ENCODE measurements at regions of chr5 and their contacts with region 1.

Region 1: DNA sequence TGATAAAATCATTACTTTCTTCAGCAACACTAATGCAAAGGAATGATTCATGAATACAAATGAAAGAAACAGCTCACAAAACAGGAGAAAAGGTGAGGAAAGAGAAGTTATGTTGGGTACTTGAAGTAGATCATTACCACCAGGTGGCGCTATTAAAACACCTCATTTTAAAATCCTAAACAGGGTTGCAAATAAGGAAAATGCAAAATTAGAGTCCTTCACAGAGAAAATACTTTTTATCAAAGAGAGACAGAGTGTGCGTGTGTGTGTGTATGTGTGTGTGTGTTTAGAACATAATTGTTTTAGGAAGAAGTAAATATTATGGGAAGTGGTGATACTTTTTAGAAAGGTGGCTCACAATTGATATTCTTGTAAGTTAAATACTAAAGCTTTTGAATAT is 49.5 kb upstream of the CD180 start:
- DNase-seq: peak in 7 of 9 donors; percentile 43 to 70 (median 64)
- ATAC-seq: peak; percentile 57
- H3K4me3 ChIP-seq: no peak overlapping the region
- H3K4me3 Mint-ChIP-seq: no peak overlapping the region
- H3K27ac ChIP-seq: no peak overlapping the region
- H3K27ac Mint-ChIP-seq: no peak overlapping the region
- H3K4me1 ChIP-seq: peaks cover 5 to 8% of the 10 kb centered on the region in 2 donors
- H3K4me1 Mint-ChIP-seq: peaks cover 2 to 22% (median 19%) of the 10 kb centered on the region in 7 donors
- H3K27me3 ChIP-seq: no peaks in the 10 kb centered on the region
- H3K27me3 Mint-ChIP-seq: peaks cover 0 to under 1% (median 0%) of the 10 kb centered on the region in 5 donors

Region 2: GRCh38 chr5:67089200-67089725 is 156.8 kb before region 1 on chr5:
- CTCF ChIA-PET with region 1: no interaction called
- POLR2A ChIA-PET with region 1: no interaction called
- intact Hi-C with region 1: no loop called
- DNase-seq: no peak
- ATAC-seq: no peak
- H3K4me3 ChIP-seq: no peak overlapping the region
- H3K4me3 Mint-ChIP-seq: no peak overlapping the region
- H3K27ac ChIP-seq: no peak overlapping the region
- H3K27ac Mint-ChIP-seq: no peak overlapping the region
- H3K4me1 ChIP-seq: no peaks in the 10 kb centered on the region
- H3K4me1 Mint-ChIP-seq: peaks cover 0 to 18% (median 5%) of the 10 kb centered on the region in 7 donors
- H3K27me3 ChIP-seq: no peaks in the 10 kb centered on the region
- H3K27me3 Mint-ChIP-seq: no peaks in the 10 kb centered on the region

Region 3: GRCh38 chr5:67361932-67362729 is 116.0 kb after region 1 on chr5:
- CTCF ChIA-PET with region 1: no interaction called
- POLR2A ChIA-PET with region 1: no interaction called
- intact Hi-C with region 1: loop called in 1 of 2 experiments (anchors 10 kb)
- DNase-seq: no peak
- ATAC-seq: no peak
- H3K4me3 ChIP-seq: no peak overlapping the region
- H3K4me3 Mint-ChIP-seq: no peak overlapping the region
- H3K27ac ChIP-seq: no peak overlapping the region
- H3K27ac Mint-ChIP-seq: no peak overlapping the region
- H3K4me1 ChIP-seq: peaks cover 5% of the 10 kb centered on the region in 2 donors
- H3K4me1 Mint-ChIP-seq: peaks cover 6 to 18% (median 10%) of the 10 kb centered on the region in 7 donors
- H3K27me3 ChIP-seq: no peaks in the 10 kb centered on the region
- H3K27me3 Mint-ChIP-seq: peaks cover 0 to 4% (median 2%) of the 10 kb centered on the region in 5 donors

Region 4: DNA sequence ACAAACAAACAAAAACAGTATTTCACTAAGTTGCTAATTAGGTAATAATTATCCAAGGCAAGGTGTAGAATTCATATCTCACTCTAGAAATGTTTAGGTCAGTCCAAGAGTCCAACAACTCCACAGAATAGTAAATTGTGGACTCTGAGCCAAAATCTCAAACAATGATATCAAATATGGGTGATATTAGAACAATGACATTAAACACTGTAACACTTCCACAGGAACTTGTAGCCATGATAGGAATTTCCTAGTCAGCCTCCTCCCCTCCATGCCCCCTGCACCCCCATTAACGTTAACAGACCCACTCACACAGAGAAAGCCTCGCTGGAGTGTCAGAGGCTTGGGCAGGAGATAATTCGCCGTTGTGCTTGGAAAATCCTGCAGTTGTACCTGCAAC is 664.4 kb after region 1 on chr5:
- CTCF ChIA-PET with region 1: no interaction called
- POLR2A ChIA-PET with region 1: no interaction called
- intact Hi-C with region 1: loop called in 1 of 2 experiments (anchors 5 kb)
- DNase-seq: no peak
- ATAC-seq: no peak
- H3K4me3 ChIP-seq: no peak overlapping the region
- H3K4me3 Mint-ChIP-seq: no peak overlapping the region
- H3K27ac ChIP-seq: no peak overlapping the region
- H3K27ac Mint-ChIP-seq: no peak overlapping the region
- H3K4me1 ChIP-seq: no peaks in the 10 kb centered on the region
- H3K4me1 Mint-ChIP-seq: peaks cover 0 to 1% (median 0%) of the 10 kb centered on the region in 7 donors
- H3K27me3 ChIP-seq: no peaks in the 10 kb centered on the region
- H3K27me3 Mint-ChIP-seq: peaks cover 0 to 8% (median 4%) of the 10 kb centered on the region in 5 donors

Region 5: DNA sequence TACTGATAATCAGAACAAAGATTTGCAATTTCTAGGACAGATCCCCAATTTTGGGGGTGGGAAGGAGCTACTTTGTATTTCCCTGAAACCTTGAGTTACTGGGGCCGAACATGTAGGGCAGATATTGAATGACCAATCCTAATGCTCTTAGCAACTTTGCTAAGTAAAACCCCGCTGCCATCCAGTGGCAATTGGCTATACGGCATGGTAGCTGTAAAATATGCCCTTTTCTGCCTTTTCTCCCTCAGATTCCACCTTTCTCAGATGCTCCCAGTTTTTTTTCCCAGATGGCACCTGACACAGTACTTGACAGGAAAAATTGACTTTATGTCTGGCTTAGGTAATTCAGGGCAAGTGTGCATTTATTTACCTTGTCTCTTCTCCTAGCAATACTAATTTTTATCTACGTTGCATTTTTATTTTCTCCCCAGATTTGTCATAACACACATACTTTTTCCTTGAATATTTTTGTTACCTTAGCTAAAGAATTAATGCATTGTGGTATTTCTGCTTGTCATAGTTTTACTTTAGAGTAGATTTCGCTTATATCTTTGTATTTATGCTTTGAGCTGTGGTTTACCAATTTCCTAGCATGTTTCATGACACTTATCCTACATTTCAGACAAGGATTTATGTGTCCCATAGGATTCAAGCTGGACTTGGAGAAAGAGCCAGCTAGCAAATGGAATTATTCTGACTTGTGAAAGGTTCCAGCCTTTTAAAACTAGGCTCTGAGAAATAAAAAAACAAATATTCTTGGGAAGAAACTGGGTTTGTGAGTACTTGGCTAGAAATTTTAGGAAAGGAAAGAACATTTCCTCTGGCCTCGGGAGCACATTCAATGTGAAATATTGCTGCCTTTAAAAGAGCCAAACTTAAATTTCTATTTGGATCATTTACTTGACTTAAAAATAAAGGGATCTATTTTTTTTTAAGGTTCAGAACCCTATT is 1006.8 kb after region 1 on chr5:
- CTCF ChIA-PET with region 1: interaction called, 33 read pairs
- POLR2A ChIA-PET with region 1: interaction called, 9 read pairs
- intact Hi-C with region 1: loop called (anchors 1 kb)
- DNase-seq: peak in 5 of 9 donors; percentile 31 to 43 (median 33)
- ATAC-seq: peak; percentile 53
- H3K4me3 ChIP-seq: no peak overlapping the region
- H3K4me3 Mint-ChIP-seq: peak overlapping the region in 5 of 10 donors; percentile 1 to 79 (median 57)
- H3K27ac ChIP-seq: peak overlapping the region; percentile 60
- H3K27ac Mint-ChIP-seq: peak overlapping the region in 8 of 9 donors; percentile 53 to 95 (median 92)
- H3K4me1 ChIP-seq: peaks cover 67 to 77% of the 10 kb centered on the region in 2 donors
- H3K4me1 Mint-ChIP-seq: peaks cover 71 to 98% (median 94%) of the 10 kb centered on the region in 7 donors
- H3K27me3 ChIP-seq: no peaks in the 10 kb centered on the region
- H3K27me3 Mint-ChIP-seq: no peaks in the 10 kb centered on the region

Region 6: GRCh38 chr5:68433923-68434879 is 1188.1 kb after region 1 on chr5:
- CTCF ChIA-PET with region 1: no interaction called
- POLR2A ChIA-PET with region 1: no interaction called
- intact Hi-C with region 1: loop called in 1 of 2 experiments (anchors 1 kb)
- DNase-seq: peak; percentile 45 to 91 (median 68)
- ATAC-seq: peak; percentile 94
- H3K4me3 ChIP-seq: peak overlapping the region; percentile 36
- H3K4me3 Mint-ChIP-seq: peak overlapping the region; percentile 37 to 81 (median 76)
- H3K27ac ChIP-seq: no peak overlapping the region
- H3K27ac Mint-ChIP-seq: peak overlapping the region; percentile 52 to 92 (median 76)
- H3K4me1 ChIP-seq: peaks cover 17 to 23% of the 10 kb centered on the region in 2 donors
- H3K4me1 Mint-ChIP-seq: peaks cover 23 to 45% (median 34%) of the 10 kb centered on the region in 7 donors
- H3K27me3 ChIP-seq: no peaks in the 10 kb centered on the region
- H3K27me3 Mint-ChIP-seq: peaks cover 0 to 63% (median 0%) of the 10 kb centered on the region in 5 donors

Region 7: GRCh38 chr5:69007726-69008368 is 1761.7 kb after region 1 on chr5:
- CTCF ChIA-PET with region 1: no interaction called
- POLR2A ChIA-PET with region 1: interaction called, 6 read pairs
- intact Hi-C with region 1: loop called (anchors 1 to 5 kb)
- DNase-seq: peak; percentile 24 to 69 (median 62)
- ATAC-seq: peak; percentile 88
- H3K4me3 ChIP-seq: no peak overlapping the region
- H3K4me3 Mint-ChIP-seq: no peak overlapping the region
- H3K27ac ChIP-seq: no peak overlapping the region
- H3K27ac Mint-ChIP-seq: no peak overlapping the region
- H3K4me1 ChIP-seq: no peaks in the 10 kb centered on the region
- H3K4me1 Mint-ChIP-seq: no peaks in the 10 kb centered on the region
- H3K27me3 ChIP-seq: no peaks in the 10 kb centered on the region
- H3K27me3 Mint-ChIP-seq: peaks cover 14 to 51% (median 29%) of the 10 kb centered on the region in 5 donors